ENCODE measurements at regions of chr18 and their contacts with region 1.

Region 1: DNA sequence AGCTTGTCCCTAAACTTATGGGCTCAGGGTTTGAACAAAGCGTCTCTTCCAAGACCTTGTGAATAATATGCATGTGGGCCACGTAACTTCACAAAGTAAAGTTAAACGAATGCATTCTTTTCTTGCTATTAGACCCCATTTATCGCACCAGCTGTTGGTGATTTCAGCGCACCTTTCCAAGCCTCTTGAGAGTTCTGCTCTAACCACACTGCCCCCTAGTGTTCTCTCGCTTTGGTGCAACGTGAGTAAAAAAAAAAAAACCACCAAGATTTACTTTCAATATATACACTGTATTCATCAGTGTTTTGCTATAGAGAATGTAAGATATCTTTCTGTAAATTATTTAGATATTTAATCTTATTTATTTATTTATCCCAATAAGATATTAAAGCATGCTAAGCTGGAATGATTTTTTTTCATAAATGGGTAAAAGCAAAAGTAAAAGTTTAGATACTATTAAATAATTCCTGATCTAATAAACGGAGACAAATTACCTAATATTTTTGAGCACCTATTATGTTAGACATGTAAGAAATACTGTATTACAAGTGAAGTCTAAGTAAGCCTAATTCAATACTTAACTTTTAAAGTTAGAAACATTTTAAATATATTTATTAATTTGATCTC is 459.5 kb downstream of the DLGAP1 start:
- DNase-seq: peak; percentile 73
- ATAC-seq: peak; percentile 49; the same call in 1 of the 2 replicates
- H3K4me3 ChIP-seq: no peak overlapping the region
- H3K27ac ChIP-seq: no peak overlapping the region
- H3K4me1 ChIP-seq: peaks cover 0 to 3% of the 10 kb centered on the region in 2 experiments; a peak in 1 of 4 replicates
- H3K27me3 ChIP-seq: no peaks in the 10 kb centered on the region
- CTCF ChIP-seq: peak; percentile 58 to 85 (median 83); a peak in 5 of 6 replicates
- POLR2A ChIP-seq: no peak
- RAD21 ChIP-seq: peak; percentile 51

Region 2: DNA sequence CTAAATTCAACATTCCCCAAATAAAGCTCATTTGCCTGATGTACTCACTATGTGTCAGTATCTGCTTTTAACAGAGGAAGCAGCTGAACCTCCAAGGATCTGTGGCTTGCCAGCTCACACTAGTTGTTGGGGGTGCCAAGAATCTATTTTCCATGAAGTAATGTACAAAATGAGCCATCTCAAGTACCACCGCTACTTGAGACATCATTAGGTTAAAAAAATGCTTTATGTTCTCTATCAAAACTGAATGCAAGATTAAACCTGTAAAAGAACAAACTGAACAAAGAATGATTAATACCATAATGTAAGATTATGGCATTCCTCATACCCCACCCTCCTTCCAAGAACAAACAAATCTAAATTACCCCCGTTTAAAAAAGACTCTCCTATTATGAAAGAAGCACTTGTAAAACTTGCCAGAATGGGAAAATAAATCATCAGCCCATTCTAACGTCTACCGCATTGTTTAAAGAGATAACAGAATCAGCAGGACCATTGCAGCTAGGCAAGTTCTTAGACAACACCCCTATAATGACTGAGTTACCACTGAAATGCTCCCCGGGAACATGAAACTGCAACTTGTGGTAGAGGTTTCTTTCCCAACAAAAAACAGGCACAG is 12.1 kb before region 1 on chr18:
- CTCF ChIA-PET with region 1: interaction called, 14 read pairs
- POLR2A ChIA-PET with region 1: interaction called, 4 read pairs
- RAD21 ChIA-PET with region 1: no interaction called
- intact Hi-C with region 1: no loop called
- DNase-seq: no peak
- ATAC-seq: no peak
- H3K4me3 ChIP-seq: no peak overlapping the region
- H3K27ac ChIP-seq: no peak overlapping the region
- H3K4me1 ChIP-seq: no peaks in the 10 kb centered on the region
- H3K27me3 ChIP-seq: no peaks in the 10 kb centered on the region
- CTCF ChIP-seq: no peak
- POLR2A ChIP-seq: no peak
- RAD21 ChIP-seq: no peak

Measured in HCT116 (cell line).